Naive thymus-derived CD4-positive, alpha-beta T cell (primary cell): ENCODE measurements at regions of chr5 and their contacts with region 1.

Region 1: GRCh38 chr5:75681125-75681830 is 36.0 kb downstream of the POC5 start:
- DNase-seq: peak in 4 of 9 donors; percentile 24 to 46 (median 38)
- ATAC-seq: peak; percentile 66
- H3K4me3 ChIP-seq: no peak overlapping the region
- H3K4me3 Mint-ChIP-seq: no peak overlapping the region
- H3K27ac ChIP-seq: no peak overlapping the region
- H3K27ac Mint-ChIP-seq: no peak overlapping the region
- H3K4me1 ChIP-seq: peaks cover 0 to 3% of the 10 kb centered on the region in 2 donors
- H3K4me1 Mint-ChIP-seq: peaks cover 7 to 27% (median 18%) of the 10 kb centered on the region in 7 donors
- H3K27me3 ChIP-seq: no peaks in the 10 kb centered on the region
- H3K27me3 Mint-ChIP-seq: no peaks in the 10 kb centered on the region

Region 2: GRCh38 chr5:74394916-74395781 is 1286.1 kb before region 1 on chr5:
- CTCF ChIA-PET with region 1: no interaction called
- POLR2A ChIA-PET with region 1: no interaction called
- intact Hi-C with region 1: no loop called
- DNase-seq: no peak
- ATAC-seq: no peak
- H3K4me3 ChIP-seq: no peak overlapping the region
- H3K4me3 Mint-ChIP-seq: no peak overlapping the region
- H3K27ac ChIP-seq: no peak overlapping the region
- H3K27ac Mint-ChIP-seq: no peak overlapping the region
- H3K4me1 ChIP-seq: no peaks in the 10 kb centered on the region
- H3K4me1 Mint-ChIP-seq: peaks cover 0 to 22% (median 0%) of the 10 kb centered on the region in 7 donors
- H3K27me3 ChIP-seq: no peaks in the 10 kb centered on the region
- H3K27me3 Mint-ChIP-seq: peaks cover 0 to 2% (median 0%) of the 10 kb centered on the region in 5 donors

Region 3: GRCh38 chr5:74673011-74673790 is 1008.1 kb before region 1 on chr5:
- CTCF ChIA-PET with region 1: no interaction called
- POLR2A ChIA-PET with region 1: no interaction called
- intact Hi-C with region 1: loop called in 1 of 2 experiments (anchors 5 kb)
- DNase-seq: peak in 5 of 9 donors; percentile 8 to 30 (median 21)
- ATAC-seq: no peak
- H3K4me3 ChIP-seq: no peak overlapping the region
- H3K4me3 Mint-ChIP-seq: no peak overlapping the region
- H3K27ac ChIP-seq: no peak overlapping the region
- H3K27ac Mint-ChIP-seq: no peak overlapping the region
- H3K4me1 ChIP-seq: no peaks in the 10 kb centered on the region
- H3K4me1 Mint-ChIP-seq: peaks cover 0 to 2% (median 0%) of the 10 kb centered on the region in 7 donors
- H3K27me3 ChIP-seq: no peaks in the 10 kb centered on the region
- H3K27me3 Mint-ChIP-seq: peaks cover 9 to 31% (median 15%) of the 10 kb centered on the region in 5 donors

Region 4: DNA sequence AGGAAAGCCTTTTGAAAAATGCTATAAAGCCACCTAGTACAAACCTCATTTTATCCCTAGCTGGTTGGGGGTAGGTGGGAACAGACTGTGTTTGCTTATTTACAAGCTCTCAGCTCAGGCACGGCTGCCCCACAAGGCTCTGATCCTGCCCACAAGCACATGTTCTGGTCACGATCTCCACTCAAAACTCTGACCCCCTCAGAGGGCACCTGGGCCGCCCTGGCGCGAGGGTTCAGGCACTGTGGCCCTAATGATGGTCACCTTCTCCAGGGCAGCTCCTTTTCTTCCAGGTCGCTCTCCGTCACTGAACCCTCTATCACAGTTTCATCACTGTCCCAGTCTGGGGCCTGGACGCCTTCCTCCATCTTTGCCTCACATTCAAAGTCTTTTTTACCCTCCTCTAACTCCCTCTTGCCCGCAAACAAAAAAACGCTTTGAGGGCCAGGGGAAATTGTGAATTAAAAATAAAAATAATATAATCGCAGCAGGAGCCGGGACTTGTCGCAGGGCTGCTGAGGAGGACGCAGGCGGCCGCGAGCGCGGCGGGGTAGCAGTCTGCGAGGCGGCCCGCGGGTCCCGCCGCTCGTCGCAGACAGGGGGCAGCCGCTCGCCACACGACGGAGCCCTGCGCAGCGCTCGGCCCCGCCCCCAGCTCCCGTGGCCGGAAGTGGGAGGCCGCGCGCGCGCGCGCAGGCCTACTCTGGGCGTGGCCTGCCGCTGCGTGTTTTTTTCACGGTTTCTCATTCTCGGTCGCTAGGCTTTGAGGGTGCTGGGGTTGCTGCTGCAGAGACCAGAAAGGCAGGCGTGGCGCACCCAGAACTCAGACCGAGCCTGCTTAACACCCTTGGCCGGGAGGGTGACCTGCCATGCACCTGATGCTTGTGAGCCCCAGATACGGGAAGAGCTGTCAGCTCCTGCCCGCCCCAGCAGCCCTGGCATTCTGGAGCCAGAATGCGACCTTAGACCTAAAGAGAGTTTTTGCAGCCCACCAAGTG is 444.7 kb before region 1 on chr5 and contains the start of gene ANKRD31:
- CTCF ChIA-PET with region 1: interaction called, 5 read pairs
- POLR2A ChIA-PET with region 1: interaction called, 3 read pairs
- intact Hi-C with region 1: loop called (anchors 1 to 2 kb)
- DNase-seq: peak; percentile 83 to 97 (median 93)
- ATAC-seq: peak; percentile 100
- H3K4me3 ChIP-seq: peak within 1 kb of the TSS; percentile 69
- H3K4me3 Mint-ChIP-seq: peak within 1 kb of the TSS; percentile 78 to 99 (median 96)
- H3K27ac ChIP-seq: peak within 1 kb of the TSS; percentile 80
- H3K27ac Mint-ChIP-seq: peak within 1 kb of the TSS; percentile 89 to 99 (median 98)
- H3K4me1 ChIP-seq: peaks cover 0 to 17% of the 10 kb centered on the region in 2 donors
- H3K4me1 Mint-ChIP-seq: peaks cover 3 to 22% (median 18%) of the 10 kb centered on the region in 7 donors
- H3K27me3 ChIP-seq: no peaks in the 10 kb centered on the region
- H3K27me3 Mint-ChIP-seq: peaks cover 0 to 4% (median 0%) of the 10 kb centered on the region in 5 donors
- total RNA-seq, gene ANKRD31: 0.29 to 1.6 (median 0.93) TPM

Region 5: DNA sequence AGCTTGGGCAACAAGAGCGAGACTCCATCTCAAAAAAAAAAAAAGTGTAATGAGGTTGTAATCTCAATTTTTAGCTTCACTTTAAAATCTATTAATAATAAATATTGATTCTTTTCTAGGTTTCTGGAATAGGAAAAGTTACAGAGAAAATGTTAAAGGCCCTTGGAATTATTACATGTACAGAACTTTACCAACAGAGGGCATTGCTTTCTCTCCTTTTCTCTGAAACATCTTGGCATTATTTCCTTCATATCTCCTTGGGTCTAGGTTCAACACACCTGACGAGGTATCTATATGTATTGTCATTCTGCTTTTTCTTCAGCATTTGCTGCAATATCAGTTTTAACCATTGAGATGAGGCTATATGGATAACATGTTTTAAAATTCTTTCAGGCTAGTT is 96.6 kb before region 1 on chr5:
- CTCF ChIA-PET with region 1: no interaction called
- POLR2A ChIA-PET with region 1: interaction called, 3 read pairs
- intact Hi-C with region 1: loop called (anchors 1 to 5 kb)
- DNase-seq: no peak
- ATAC-seq: no peak
- H3K4me3 ChIP-seq: no peak overlapping the region
- H3K4me3 Mint-ChIP-seq: no peak overlapping the region
- H3K27ac ChIP-seq: no peak overlapping the region
- H3K27ac Mint-ChIP-seq: no peak overlapping the region
- H3K4me1 ChIP-seq: no peaks in the 10 kb centered on the region
- H3K4me1 Mint-ChIP-seq: peaks cover 0 to 4% (median 2%) of the 10 kb centered on the region in 7 donors
- H3K27me3 ChIP-seq: no peaks in the 10 kb centered on the region
- H3K27me3 Mint-ChIP-seq: no peaks in the 10 kb centered on the region

Region 6: GRCh38 chr5:75717082-75717922 is 36.0 kb after region 1 on chr5 and contains the start of gene POC5:
- CTCF ChIA-PET with region 1: no interaction called
- POLR2A ChIA-PET with region 1: no interaction called
- intact Hi-C with region 1: loop called in 1 of 2 experiments (anchors 5 kb)
- DNase-seq: peak; percentile 93 to 99 (median 98)
- ATAC-seq: peak; percentile 97
- H3K4me3 ChIP-seq: peak within 1 kb of the TSS; percentile 74
- H3K4me3 Mint-ChIP-seq: peak within 1 kb of the TSS; percentile 93 to 100 (median 99)
- H3K27ac ChIP-seq: peak within 1 kb of the TSS; percentile 78
- H3K27ac Mint-ChIP-seq: peak within 1 kb of the TSS; percentile 92 to 100 (median 97)
- H3K4me1 ChIP-seq: peaks cover 5 to 8% of the 10 kb centered on the region in 2 donors
- H3K4me1 Mint-ChIP-seq: peaks cover 26 to 47% (median 37%) of the 10 kb centered on the region in 7 donors
- H3K27me3 ChIP-seq: no peaks in the 10 kb centered on the region
- H3K27me3 Mint-ChIP-seq: peaks cover 0 to 10% (median 0%) of the 10 kb centered on the region in 5 donors
- total RNA-seq, gene POC5: 8.5 to 17.9 (median 15.0) TPM

Region 7: GRCh38 chr5:75744355-75744754 is 63.1 kb after region 1 on chr5:
- CTCF ChIA-PET with region 1: no interaction called
- POLR2A ChIA-PET with region 1: no interaction called
- intact Hi-C with region 1: no loop called
- DNase-seq: no peak
- ATAC-seq: no peak
- H3K4me3 ChIP-seq: no peak overlapping the region
- H3K4me3 Mint-ChIP-seq: no peak overlapping the region
- H3K27ac ChIP-seq: no peak overlapping the region
- H3K27ac Mint-ChIP-seq: no peak overlapping the region
- H3K4me1 ChIP-seq: no peaks in the 10 kb centered on the region
- H3K4me1 Mint-ChIP-seq: peaks cover 0 to 8% (median 6%) of the 10 kb centered on the region in 7 donors
- H3K27me3 ChIP-seq: no peaks in the 10 kb centered on the region
- H3K27me3 Mint-ChIP-seq: peaks cover 4 to 23% (median 22%) of the 10 kb centered on the region in 5 donors